AG04449 (cell line): ENCODE measurements at regions of chr1 and their contacts with region 1.

Region 1: GRCh38 chr1:153532769-153533599 is 2.8 kb downstream of the S100A6 start:
- DNase-seq: no peak
- H3K4me3 ChIP-seq: peak overlapping the region; percentile 99
- CTCF ChIP-seq: peak; percentile 99

Region 2: GRCh38 chr1:153352523-153352922 is 180.5 kb before region 1 on chr1:
- CTCF ChIA-PET with region 1: interaction called, 14 read pairs
- POLR2A ChIA-PET with region 1: no interaction called
- DNase-seq: peak; percentile 2
- H3K4me3 ChIP-seq: no peak overlapping the region
- CTCF ChIP-seq: peak; percentile 82

Region 3: GRCh38 chr1:153545067-153546055 is 12.4 kb after region 1 on chr1 and contains the start of gene S100A4:
- CTCF ChIA-PET with region 1: interaction called, 80 read pairs
- POLR2A ChIA-PET with region 1: interaction called, 128 read pairs
- DNase-seq: peak; percentile 65
- H3K4me3 ChIP-seq: peak within 1 kb of the TSS; percentile 56
- CTCF ChIP-seq: no peak

Region 4: GRCh38 chr1:153566440-153567379 is 33.7 kb after region 1 on chr1:
- CTCF ChIA-PET with region 1: interaction called, 333 read pairs
- POLR2A ChIA-PET with region 1: interaction called, 119 read pairs
- DNase-seq: peak; percentile 91
- H3K4me3 ChIP-seq: peak overlapping the region; percentile 23
- CTCF ChIP-seq: no peak

Region 5: GRCh38 chr1:153608742-153609584 is 76.0 kb after region 1 on chr1:
- CTCF ChIA-PET with region 1: interaction called, 24 read pairs
- POLR2A ChIA-PET with region 1: interaction called, 15 read pairs
- DNase-seq: no peak
- H3K4me3 ChIP-seq: peak overlapping the region; percentile 58
- CTCF ChIP-seq: no peak

Region 6: GRCh38 chr1:153626922-153627796 is 94.2 kb after region 1 on chr1 and contains the start of gene S100A13:
- CTCF ChIA-PET with region 1: interaction called, 56 read pairs
- POLR2A ChIA-PET with region 1: interaction called, 47 read pairs
- DNase-seq: peak; percentile 70
- H3K4me3 ChIP-seq: peak within 1 kb of the TSS; percentile 84
- CTCF ChIP-seq: peak; percentile 84

Region 7: GRCh38 chr1:153717330-153717729 is 184.3 kb after region 1 on chr1:
- CTCF ChIA-PET with region 1: no interaction called
- POLR2A ChIA-PET with region 1: no interaction called
- DNase-seq: no peak
- H3K4me3 ChIP-seq: no peak overlapping the region
- CTCF ChIP-seq: no peak

Region 8: GRCh38 chr1:153790966-153791647 is 258.1 kb after region 1 on chr1:
- CTCF ChIA-PET with region 1: no interaction called
- POLR2A ChIA-PET with region 1: no interaction called
- DNase-seq: peak; percentile 72
- H3K4me3 ChIP-seq: peak overlapping the region; percentile 32
- CTCF ChIP-seq: no peak